ENCODE measurements at regions of chr16 and their contacts with region 1.

Region 1: DNA sequence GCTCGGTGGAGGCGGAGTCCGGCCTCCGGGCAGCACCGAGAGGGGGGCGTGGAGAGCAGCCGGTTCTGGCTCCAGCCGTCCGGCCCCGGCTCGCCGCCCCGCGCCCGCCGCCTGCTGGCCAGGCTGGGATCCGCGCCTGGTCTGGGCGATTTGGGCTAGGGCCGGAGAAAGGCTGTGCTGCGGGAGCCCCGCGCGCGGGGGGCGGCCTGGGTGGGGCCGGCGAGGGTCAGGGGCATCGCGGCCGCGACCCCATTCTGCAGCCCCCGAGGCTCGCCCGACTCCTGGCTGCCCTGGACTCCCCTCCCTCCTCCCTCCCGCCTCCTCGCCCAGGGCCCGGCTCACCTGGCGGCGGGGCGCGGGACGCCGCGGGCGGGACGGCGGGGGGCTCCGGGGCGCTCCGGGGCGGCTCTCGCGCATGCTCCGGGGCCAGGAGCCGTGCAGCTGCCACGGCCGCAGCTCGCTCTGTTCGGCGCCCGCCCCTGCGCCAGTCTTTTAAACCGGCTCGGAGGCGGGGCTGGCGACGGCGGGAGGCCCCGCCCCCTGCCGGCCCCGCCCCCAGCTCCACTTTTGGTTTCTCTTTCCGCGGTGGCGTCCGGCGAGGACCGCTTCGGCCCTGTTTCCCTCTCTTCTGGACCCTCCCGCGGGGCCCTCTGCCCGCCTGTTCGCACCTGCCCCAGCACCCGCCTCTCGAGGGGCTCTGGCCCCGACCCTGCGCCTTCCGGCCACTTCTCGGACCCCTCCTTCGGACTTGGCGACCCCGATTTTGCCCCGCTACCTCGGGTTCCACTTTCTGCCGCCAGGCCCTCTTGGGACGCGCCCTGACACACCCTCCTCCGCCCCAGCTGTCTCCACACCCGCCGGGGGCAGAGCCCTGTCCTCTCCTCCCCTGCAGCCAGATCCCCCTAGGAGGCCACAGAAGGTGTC is at the start of gene SOCS1:
- DNase-seq: peak; percentile 83
- H3K4me3 ChIP-seq: peak within 1 kb of the TSS; percentile 68 to 80 (median 79)
- H3K27ac ChIP-seq: peak within 1 kb of the TSS; percentile 60
- H3K4me1 ChIP-seq: peaks cover 23% of the 10 kb centered on the region
- H3K27me3 ChIP-seq: no peaks in the 10 kb centered on the region
- CTCF ChIP-seq: peak; percentile 60 to 69
- total RNA-seq, gene SOCS1: 2.0 to 7.9 TPM

Region 2: GRCh38 chr16:10971560-10971961 is 284.4 kb before region 1 on chr16:
- CTCF ChIA-PET with region 1: interaction called, 5 read pairs
- dilution Hi-C with region 1: no loop called
- in situ Hi-C with region 1: loop called in 1 of 2 experiments (anchors 5 kb)
- intact Hi-C with region 1: loop called (anchors 1 kb)
- DNase-seq: peak; percentile 69
- H3K4me3 ChIP-seq: no peak overlapping the region
- H3K27ac ChIP-seq: no peak overlapping the region
- H3K4me1 ChIP-seq: peaks cover 7% of the 10 kb centered on the region
- H3K27me3 ChIP-seq: no peaks in the 10 kb centered on the region
- CTCF ChIP-seq: peak; percentile 65 to 72

Region 3: DNA sequence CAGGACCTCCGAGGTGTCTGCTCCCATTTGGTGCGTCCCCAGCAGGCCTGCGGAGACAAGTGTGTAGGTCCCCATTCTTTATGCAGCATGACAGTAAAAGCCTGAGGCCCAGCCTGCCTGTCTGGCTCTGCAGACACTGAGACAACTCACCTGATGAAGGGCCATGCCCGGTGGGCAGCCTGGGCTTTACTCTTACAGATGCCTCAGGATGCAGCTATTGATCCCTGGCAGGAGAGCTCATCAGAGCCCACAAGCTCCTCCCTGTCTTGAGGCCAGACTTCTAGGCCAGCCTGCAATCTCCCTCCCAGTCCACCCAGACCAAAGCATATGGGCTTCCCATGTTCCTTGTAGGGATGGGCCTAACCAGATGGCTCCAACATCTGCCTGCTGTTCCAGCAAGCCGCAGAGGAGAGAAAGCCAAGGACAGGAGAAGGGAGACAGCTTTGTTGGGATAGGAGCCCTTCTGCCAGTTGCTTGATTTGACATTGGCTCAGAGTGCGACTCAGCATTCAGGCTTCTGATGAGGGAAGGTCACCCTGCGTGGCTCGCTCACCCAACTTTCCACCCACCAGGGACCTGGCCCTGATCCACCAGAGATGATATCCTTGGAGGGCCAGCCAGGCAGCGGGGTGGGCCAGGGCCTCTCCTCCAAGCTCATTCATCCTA is 87.5 kb before region 1 on chr16:
- CTCF ChIA-PET with region 1: no interaction called
- dilution Hi-C with region 1: no loop called
- in situ Hi-C with region 1: no loop called
- intact Hi-C with region 1: no loop called
- DNase-seq: no peak
- H3K4me3 ChIP-seq: no peak overlapping the region
- H3K27ac ChIP-seq: no peak overlapping the region
- H3K4me1 ChIP-seq: no peaks in the 10 kb centered on the region
- H3K27me3 ChIP-seq: no peaks in the 10 kb centered on the region
- CTCF ChIP-seq: no peak

Region 4: GRCh38 chr16:11181899-11182279 is 74.1 kb before region 1 on chr16:
- CTCF ChIA-PET with region 1: no interaction called
- dilution Hi-C with region 1: no loop called
- in situ Hi-C with region 1: no loop called
- intact Hi-C with region 1: loop called (anchors 5 kb)
- DNase-seq: peak; percentile 44
- H3K4me3 ChIP-seq: no peak overlapping the region
- H3K27ac ChIP-seq: peak overlapping the region; percentile 33
- H3K4me1 ChIP-seq: peaks cover 26% of the 10 kb centered on the region
- H3K27me3 ChIP-seq: no peaks in the 10 kb centered on the region
- CTCF ChIP-seq: no peak

Region 5: DNA sequence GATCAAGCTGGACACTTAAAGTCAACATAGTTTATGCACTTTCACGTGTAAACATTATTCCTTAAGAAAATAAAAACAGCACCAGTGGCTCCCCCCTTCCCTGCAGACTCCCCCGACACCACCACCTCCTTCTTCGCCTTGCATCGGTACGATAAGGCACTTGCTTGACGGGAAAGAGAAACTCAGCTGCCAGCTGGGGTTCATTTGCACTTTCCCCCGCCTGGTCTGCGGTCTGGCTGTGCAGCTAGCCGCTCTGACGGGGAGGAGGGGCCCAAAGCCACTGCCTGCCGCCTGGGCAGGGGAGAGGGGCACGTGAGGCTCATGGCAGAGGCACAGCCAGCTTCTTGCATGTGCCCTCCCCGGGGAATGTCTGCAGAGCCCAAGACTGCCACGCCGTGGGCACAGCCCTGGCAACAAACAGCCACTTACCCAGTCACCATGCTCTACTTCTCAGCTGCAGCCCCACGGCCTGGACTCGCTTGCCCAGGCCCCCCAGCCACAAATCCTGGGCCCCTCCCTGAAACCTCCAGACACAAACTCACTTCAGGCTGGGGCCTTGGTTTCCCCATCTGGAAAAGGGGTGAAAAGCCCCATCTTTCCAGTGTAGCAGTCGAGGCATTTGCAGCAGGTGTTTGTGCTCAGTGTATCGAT is 41.6 kb after region 1 on chr16:
- CTCF ChIA-PET with region 1: no interaction called
- dilution Hi-C with region 1: loop called (anchors 5 kb)
- in situ Hi-C with region 1: no loop called
- intact Hi-C with region 1: no loop called
- DNase-seq: no peak
- H3K4me3 ChIP-seq: peak overlapping the region in 2 of 3 experiments; percentile 25 to 29
- H3K27ac ChIP-seq: no peak overlapping the region
- H3K4me1 ChIP-seq: peaks cover 13% of the 10 kb centered on the region
- H3K27me3 ChIP-seq: no peaks in the 10 kb centered on the region
- CTCF ChIP-seq: peak in 1 of 2 donors; percentile 23

Region 6: DNA sequence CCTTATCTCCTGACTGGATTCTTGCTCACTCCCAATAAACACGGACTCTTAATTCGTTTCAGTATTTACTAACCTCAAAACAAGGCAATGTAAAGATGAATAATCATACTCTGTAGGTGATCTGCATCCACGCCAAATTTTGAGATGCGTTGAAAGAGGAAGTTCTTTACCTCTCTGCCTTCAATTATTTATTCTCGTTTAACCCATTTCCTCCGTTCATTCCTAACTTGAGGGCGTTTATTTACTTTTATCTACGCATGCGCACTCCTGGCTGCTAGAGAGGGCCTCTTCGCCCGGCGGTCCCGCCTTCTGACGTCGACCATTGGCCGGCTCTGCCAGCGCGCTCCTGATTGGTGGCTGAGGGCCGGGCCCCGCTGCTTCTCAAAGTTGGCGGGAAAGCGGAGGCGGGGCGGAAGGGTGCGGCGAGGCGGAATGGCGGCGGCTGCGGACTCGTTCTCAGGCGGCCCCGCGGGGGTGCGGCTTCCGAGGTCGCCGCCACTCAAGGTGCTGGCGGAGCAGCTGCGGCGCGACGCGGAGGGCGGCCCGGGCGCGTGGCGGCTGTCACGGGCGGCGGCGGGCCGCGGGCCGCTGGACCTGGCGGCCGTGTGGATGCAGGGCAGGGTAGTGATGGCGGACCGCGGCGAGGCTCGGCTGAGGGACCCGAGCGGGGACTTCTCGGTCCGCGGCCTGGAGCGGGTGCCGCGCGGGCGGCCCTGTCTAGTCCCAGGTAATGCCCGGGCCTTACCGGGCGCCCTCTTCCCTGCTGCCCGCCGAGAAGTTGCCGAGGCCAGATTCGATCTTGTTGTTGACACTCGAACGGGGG is 89.3 kb after region 1 on chr16 and contains the start of gene RMI2:
- CTCF ChIA-PET with region 1: no interaction called
- dilution Hi-C with region 1: no loop called
- in situ Hi-C with region 1: no loop called
- intact Hi-C with region 1: no loop called
- DNase-seq: peak; percentile 93
- H3K4me3 ChIP-seq: peak within 1 kb of the TSS; percentile 63 to 73 (median 67)
- H3K27ac ChIP-seq: peak within 1 kb of the TSS; percentile 33
- H3K4me1 ChIP-seq: peaks cover 8% of the 10 kb centered on the region
- H3K27me3 ChIP-seq: no peaks in the 10 kb centered on the region
- CTCF ChIP-seq: no peak
- total RNA-seq, gene RMI2: 2.2 to 14.7 TPM

Region 7: GRCh38 chr16:11370084-11370931 is 114.3 kb after region 1 on chr16:
- CTCF ChIA-PET with region 1: interaction called, 3 read pairs
- dilution Hi-C with region 1: no loop called
- in situ Hi-C with region 1: no loop called
- intact Hi-C with region 1: loop called (anchors 1 kb)
- DNase-seq: no peak
- H3K4me3 ChIP-seq: no peak overlapping the region
- H3K27ac ChIP-seq: no peak overlapping the region
- H3K4me1 ChIP-seq: no peaks in the 10 kb centered on the region
- H3K27me3 ChIP-seq: no peaks in the 10 kb centered on the region
- CTCF ChIP-seq: no peak